Activated CD4-positive, alpha-beta memory T cell treated with anti-CD3 and anti-CD28 coated beads for 36 hours (primary cell): ENCODE measurements at regions of chr2 and their contacts with region 1.

Region 1: DNA sequence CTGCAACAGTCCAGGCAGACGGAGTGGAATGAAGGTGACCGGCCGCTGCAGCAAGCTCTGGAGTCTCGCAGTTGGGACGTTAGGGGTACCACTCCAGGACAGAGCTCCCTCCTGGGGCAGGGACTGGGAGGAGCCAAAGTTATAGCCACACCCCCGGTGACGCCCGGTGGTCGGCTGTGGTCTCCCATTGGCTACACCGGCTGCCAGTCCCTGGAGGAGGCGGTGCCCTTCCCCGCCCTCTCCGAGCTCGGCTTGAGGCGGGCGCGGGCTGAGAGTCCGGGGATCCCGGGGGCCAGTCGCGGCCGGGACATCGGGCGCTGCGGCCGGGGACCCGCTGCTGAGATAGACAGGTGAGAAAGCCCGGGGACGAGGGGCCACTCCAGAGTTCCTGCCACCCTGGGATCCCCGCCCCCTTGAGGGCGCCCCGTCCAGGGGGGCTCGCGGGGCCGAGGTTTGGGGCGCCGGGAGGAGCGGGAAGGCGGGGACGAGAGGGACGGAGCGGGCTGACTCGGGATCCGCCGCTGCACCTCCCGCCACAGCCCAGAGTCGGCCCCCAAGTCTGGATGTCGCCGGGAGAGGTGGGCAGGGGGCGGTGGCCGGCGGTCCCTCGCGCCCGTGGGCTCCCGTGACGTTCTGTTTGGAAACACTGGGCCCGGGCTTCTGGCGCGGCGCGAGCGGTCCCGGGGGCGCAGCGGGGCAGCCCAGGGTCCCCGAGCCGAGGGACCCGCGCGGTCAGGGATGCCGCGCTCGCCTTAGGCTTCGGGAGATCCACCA is at the start of gene PLEKHH2:
- DNase-seq: peak; percentile 92
- H3K4me3 Mint-ChIP-seq: peak within 1 kb of the TSS; percentile 82
- H3K27ac Mint-ChIP-seq: no peak within 1 kb of the TSS
- H3K4me1 Mint-ChIP-seq: peaks cover 14% of the 10 kb centered on the region
- H3K27me3 Mint-ChIP-seq: peaks cover 34% of the 10 kb centered on the region
- total RNA-seq, gene PLEKHH2: 0.73 to 0.81 TPM

Region 2: DNA sequence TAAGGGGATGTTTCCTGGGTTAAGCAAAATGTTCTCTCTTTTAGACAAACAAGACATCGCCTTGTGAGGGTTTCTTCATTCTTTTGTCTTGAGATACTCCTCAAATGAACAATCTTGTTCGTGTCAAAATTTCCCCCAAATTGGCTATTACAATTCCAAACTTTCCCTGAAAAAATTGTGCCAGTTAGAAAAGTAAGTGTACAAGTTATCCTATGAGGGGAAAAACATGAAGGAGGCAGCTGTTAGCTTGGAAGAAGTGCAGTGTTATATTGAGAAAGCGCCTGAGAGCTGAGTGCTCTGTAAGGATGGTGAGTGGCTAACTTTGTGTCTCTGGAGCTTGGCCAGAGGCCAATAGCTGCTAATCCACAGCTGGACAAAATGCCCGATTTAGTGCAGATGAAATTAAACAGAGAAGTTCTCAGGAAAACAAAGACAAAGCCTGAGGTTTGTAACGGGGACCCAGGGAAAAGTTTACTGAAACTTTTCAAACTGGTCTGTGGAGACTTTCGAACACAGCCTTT is 14.2 kb before region 1 on chr2:
- CTCF ChIA-PET with region 1: no interaction called
- POLR2A ChIA-PET with region 1: no interaction called
- intact Hi-C with region 1: no loop called
- DNase-seq: no peak
- H3K4me3 Mint-ChIP-seq: no peak overlapping the region
- H3K27ac Mint-ChIP-seq: no peak overlapping the region
- H3K4me1 Mint-ChIP-seq: no peaks in the 10 kb centered on the region
- H3K27me3 Mint-ChIP-seq: peaks cover 9% of the 10 kb centered on the region

Region 3: GRCh38 chr2:43773876-43774613 is 136.8 kb after region 1 on chr2 and contains the start of gene DYNC2LI1:
- CTCF ChIA-PET with region 1: no interaction called
- POLR2A ChIA-PET with region 1: no interaction called
- intact Hi-C with region 1: loop called (anchors 10 kb)
- DNase-seq: peak; percentile 91
- H3K4me3 Mint-ChIP-seq: peak within 1 kb of the TSS; percentile 95
- H3K27ac Mint-ChIP-seq: peak within 1 kb of the TSS; percentile 82
- H3K4me1 Mint-ChIP-seq: peaks cover 25% of the 10 kb centered on the region
- H3K27me3 Mint-ChIP-seq: no peaks in the 10 kb centered on the region
- total RNA-seq, gene DYNC2LI1: 17.7 to 18.7 TPM